ENCODE measurements at regions of chr4 and their contacts with region 1.

Region 1: DNA sequence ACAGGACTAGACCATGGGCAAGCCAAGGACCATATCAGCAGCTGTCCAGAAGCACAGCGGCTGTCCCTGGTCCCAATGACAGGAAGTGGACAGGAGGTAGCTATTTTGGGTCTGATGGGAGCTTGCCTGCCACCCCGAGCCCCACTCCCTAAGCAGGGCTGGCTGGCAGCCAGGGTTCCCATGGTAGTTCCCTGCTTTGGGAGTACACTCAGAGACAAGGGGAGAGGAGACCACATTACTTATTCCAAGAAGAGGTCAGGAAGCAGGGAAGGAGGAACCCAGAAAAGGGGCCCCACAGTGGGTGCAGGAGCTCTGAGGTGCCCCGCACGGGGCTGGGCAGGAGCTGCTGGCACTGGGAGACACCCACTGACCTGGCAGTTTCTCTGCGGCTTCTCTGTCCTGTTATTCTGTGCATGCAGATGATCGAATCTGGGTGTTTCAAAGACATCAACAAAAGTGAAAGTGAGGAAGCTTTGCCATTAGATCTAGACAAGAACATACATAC is 36.3 kb downstream of the HTT-AS start:
- DNase-seq: peak in 1 of 2 donors; percentile 78
- ATAC-seq: no peak
- H3K4me3 ChIP-seq: no peak overlapping the region
- H3K27ac ChIP-seq: no peak overlapping the region
- H3K4me1 ChIP-seq: no peaks in the 10 kb centered on the region
- H3K27me3 ChIP-seq: no peaks in the 10 kb centered on the region

Region 2: DNA sequence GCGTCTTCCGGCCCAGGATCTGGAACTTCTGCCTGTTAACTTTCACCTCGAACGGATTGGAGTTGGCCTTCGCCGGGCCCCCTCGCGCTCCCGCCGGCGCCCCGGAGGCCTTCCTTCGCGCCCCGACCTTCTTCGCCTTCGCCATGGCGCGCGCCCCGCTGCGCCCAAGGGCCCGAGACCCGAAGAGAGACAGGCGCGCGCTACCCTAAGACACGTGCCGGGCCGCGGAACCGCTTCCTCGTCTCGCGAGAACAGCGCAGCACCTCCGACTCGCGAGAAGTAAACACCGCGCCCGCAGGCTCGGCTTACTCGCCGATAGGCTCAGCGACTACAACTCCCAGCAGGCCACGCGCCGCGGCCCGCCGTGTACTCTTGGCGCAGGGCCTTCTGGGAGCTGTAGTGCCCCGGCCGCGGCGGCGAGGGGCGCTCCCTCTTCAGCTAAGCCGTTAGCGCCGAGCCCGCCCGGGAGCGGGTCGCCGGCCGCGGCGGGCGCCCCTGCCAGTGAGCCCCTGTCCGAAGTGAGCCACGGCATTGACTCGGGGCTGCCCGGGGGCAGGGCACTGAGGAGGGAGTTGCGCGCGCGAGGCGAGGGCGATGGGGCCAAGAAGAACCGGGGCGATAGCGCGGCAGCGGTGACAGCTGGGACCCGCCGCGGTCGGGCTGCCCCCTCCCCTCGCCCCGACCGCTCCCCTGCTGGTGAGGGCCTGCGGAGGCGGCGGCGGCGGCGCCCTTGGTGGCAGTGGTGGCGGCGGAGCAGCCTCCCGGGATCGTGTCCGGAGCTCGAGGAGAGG is 74.6 kb before region 1 on chr4 and contains the starts of genes GRK4 and NOP14:
- intact Hi-C with region 1: loop called in 1 of 2 experiments (anchors 10 kb)
- DNase-seq: peak; percentile 99 to 100
- ATAC-seq: peak; percentile 100
- H3K4me3 ChIP-seq: peak within 1 kb of the TSS; percentile 45 to 80
- H3K27ac ChIP-seq: peak within 1 kb of the TSS; percentile 12 to 60
- H3K4me1 ChIP-seq: no peaks in the 10 kb centered on the region
- H3K27me3 ChIP-seq: no peaks in the 10 kb centered on the region
- total RNA-seq, gene GRK4: 3.6 to 10.3 TPM
- total RNA-seq, gene NOP14: 15.0 to 15.5 TPM